Psoas muscle (tissue), 8 donors: ENCODE measurements at regions of chr17 and their contacts with region 1.

Region 1: GRCh38 chr17:66829386-66829864 is 5.5 kb upstream of the CACNG5 start:
- DNase-seq: peak in 1 of 2 donors; percentile 28
- ATAC-seq: peak in 2 of 4 donors; percentile 55 to 64
- H3K4me3 ChIP-seq: no peak overlapping the region
- H3K27ac ChIP-seq: no peak overlapping the region
- H3K4me1 ChIP-seq: no peaks in the 10 kb centered on the region
- H3K27me3 ChIP-seq: peaks cover 0 to 16% (median under 1%) of the 10 kb centered on the region in 3 donors
- CTCF ChIP-seq: no peak

Region 2: DNA sequence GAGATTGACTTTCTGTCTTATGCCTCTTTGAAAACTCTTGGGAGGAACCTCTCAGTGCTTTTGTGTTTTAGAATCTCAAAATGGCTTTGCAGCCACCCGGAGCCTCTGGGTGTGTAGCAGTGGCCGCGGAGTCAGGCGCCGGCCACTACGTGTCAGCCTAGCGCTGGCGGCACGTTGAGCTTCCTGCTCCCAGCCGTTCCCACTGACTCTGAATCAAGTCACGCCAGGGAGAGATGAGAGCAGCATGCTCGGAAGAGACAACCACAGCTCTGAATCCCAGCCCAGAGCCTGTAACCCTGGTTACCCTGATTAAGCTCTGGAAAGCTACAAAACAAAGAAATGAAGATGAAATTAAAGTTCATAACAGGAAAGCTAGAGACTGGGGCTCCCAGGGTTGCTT is 91.9 kb before region 1 on chr17:
- intact Hi-C with region 1: loop called in 1 of 2 experiments (anchors 10 kb)
- DNase-seq: peak in 1 of 2 donors; percentile 56
- ATAC-seq: peak in 2 of 4 donors; percentile 32 to 46
- H3K4me3 ChIP-seq: no peak overlapping the region
- H3K27ac ChIP-seq: no peak overlapping the region
- H3K4me1 ChIP-seq: no peaks in the 10 kb centered on the region
- H3K27me3 ChIP-seq: no peaks in the 10 kb centered on the region
- CTCF ChIP-seq: no peak